ENCODE measurements at regions of chr17 and their contacts with region 1.

Region 1: GRCh38 chr17:35764123-35764991 is 3.7 kb downstream of the C17orf50 start:
- DNase-seq: peak; percentile 91
- ATAC-seq: peak; percentile 87
- H3K4me3 Mint-ChIP-seq: peak overlapping the region; percentile 80
- H3K27ac Mint-ChIP-seq: peak overlapping the region; percentile 76
- H3K4me1 Mint-ChIP-seq: peaks cover 17% of the 10 kb centered on the region
- H3K27me3 Mint-ChIP-seq: peaks cover 11% of the 10 kb centered on the region
- CTCF ChIP-seq: peak; percentile 83

Region 2: DNA sequence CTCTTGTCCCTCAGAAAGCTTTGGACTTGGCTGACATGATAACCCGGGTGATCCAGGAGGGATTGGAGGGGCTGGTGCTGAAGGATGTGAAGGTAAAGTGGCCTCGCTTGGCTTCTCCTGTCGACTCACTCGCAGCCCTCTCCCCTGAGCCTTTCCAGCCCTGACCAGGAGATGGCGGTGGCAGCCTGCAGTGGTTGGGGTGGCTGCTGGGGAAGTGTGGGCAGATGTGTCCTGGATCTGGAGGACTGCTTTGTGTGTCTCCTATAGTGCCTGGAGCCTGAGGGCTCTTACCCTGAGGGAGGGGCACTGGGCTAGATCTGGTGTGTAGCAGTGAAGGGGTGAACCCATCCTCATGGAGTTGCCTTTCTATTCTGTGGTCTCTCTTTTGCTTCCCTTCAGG is 766.2 kb before region 1 on chr17:
- CTCF ChIA-PET with region 1: no interaction called
- POLR2A ChIA-PET with region 1: no interaction called
- DNase-seq: peak; percentile 79
- ATAC-seq: peak; percentile 96
- H3K4me3 Mint-ChIP-seq: no peak overlapping the region
- H3K27ac Mint-ChIP-seq: no peak overlapping the region
- H3K4me1 Mint-ChIP-seq: no peaks in the 10 kb centered on the region
- H3K27me3 Mint-ChIP-seq: no peaks in the 10 kb centered on the region
- CTCF ChIP-seq: peak; percentile 41

Region 3: GRCh38 chr17:35578197-35578928 is 186.0 kb before region 1 on chr17 and contains the start of gene PEX12:
- CTCF ChIA-PET with region 1: interaction called, 14 read pairs
- POLR2A ChIA-PET with region 1: no interaction called
- DNase-seq: peak; percentile 83
- ATAC-seq: peak; percentile 96
- H3K4me3 Mint-ChIP-seq: peak within 1 kb of the TSS; percentile 90
- H3K27ac Mint-ChIP-seq: peak within 1 kb of the TSS; percentile 89
- H3K4me1 Mint-ChIP-seq: peaks cover 11% of the 10 kb centered on the region; the same call in 1 of the 2 replicates
- H3K27me3 Mint-ChIP-seq: peaks cover 4% of the 10 kb centered on the region
- CTCF ChIP-seq: no peak
- total RNA-seq, gene PEX12: 4.7 to 6.5 TPM (median 5.2 TPM) in 3 replicates

Region 4: DNA sequence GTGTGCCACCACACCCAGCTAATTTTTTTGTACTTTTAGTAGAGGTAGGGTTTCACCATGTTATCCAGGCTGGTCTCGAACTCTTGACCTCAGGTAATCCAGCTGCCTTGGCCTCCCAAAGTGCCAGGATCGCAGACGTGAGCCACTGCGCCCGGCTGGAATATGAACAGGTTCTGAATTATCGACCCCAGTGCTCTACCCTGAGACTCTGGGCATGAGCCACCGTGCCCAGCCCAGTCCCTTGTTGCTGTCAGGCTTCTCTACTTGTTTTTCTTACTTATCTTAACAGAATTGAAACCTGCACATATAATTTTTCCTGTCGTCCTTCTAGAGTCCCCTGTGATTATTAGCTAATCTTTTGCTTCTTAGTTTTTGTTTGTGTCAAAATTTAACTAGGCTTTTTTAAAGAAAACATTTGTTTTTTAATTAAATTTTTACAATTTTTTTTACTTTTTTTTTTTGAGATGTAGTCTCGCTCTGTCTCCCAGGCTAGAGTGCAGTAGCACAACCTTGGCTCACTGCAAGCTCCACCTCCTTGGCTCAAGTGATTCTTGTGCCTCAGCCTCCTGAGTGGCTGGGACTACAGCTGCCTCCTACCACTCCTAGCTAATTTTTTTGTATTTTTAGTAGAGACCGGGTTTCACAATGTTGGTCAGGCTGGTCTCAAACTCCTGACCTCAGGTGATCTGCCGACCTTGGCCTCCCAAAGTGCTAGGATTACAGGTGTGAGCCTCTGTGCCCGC is 110.6 kb before region 1 on chr17:
- CTCF ChIA-PET with region 1: no interaction called
- POLR2A ChIA-PET with region 1: no interaction called
- DNase-seq: no peak
- ATAC-seq: no peak
- H3K4me3 Mint-ChIP-seq: no peak overlapping the region
- H3K27ac Mint-ChIP-seq: no peak overlapping the region
- H3K4me1 Mint-ChIP-seq: 0 out of 2 replicates have a peak, but pooled peaks cover under 1% of the 10 kb centered on the region
- H3K27me3 Mint-ChIP-seq: no peaks in the 10 kb centered on the region
- CTCF ChIP-seq: no peak

Region 5: GRCh38 chr17:35668802-35669201 is 95.6 kb before region 1 on chr17:
- CTCF ChIA-PET with region 1: interaction called, 10 read pairs
- POLR2A ChIA-PET with region 1: no interaction called
- DNase-seq: no peak
- ATAC-seq: no peak
- H3K4me3 Mint-ChIP-seq: no peak overlapping the region
- H3K27ac Mint-ChIP-seq: peak overlapping the region; percentile 66
- H3K4me1 Mint-ChIP-seq: peaks cover 25% of the 10 kb centered on the region
- H3K27me3 Mint-ChIP-seq: no peaks in the 10 kb centered on the region
- CTCF ChIP-seq: no peak

Region 6: GRCh38 chr17:35740997-35741931 is 23.1 kb before region 1 on chr17:
- CTCF ChIA-PET with region 1: interaction called, 22 read pairs
- POLR2A ChIA-PET with region 1: no interaction called
- DNase-seq: peak; percentile 62
- ATAC-seq: peak; percentile 75
- H3K4me3 Mint-ChIP-seq: peak overlapping the region; percentile 70
- H3K27ac Mint-ChIP-seq: no peak overlapping the region
- H3K4me1 Mint-ChIP-seq: peaks cover 6% of the 10 kb centered on the region
- H3K27me3 Mint-ChIP-seq: peaks cover 51% of the 10 kb centered on the region
- CTCF ChIP-seq: no peak

Region 7: GRCh38 chr17:35788504-35789368 is 24.4 kb after region 1 on chr17:
- CTCF ChIA-PET with region 1: interaction called, 53 read pairs
- POLR2A ChIA-PET with region 1: no interaction called
- DNase-seq: no peak
- ATAC-seq: no peak
- H3K4me3 Mint-ChIP-seq: no peak overlapping the region
- H3K27ac Mint-ChIP-seq: no peak overlapping the region
- H3K4me1 Mint-ChIP-seq: peaks cover 7% of the 10 kb centered on the region
- H3K27me3 Mint-ChIP-seq: peaks cover 25% of the 10 kb centered on the region
- CTCF ChIP-seq: no peak

Region 8: DNA sequence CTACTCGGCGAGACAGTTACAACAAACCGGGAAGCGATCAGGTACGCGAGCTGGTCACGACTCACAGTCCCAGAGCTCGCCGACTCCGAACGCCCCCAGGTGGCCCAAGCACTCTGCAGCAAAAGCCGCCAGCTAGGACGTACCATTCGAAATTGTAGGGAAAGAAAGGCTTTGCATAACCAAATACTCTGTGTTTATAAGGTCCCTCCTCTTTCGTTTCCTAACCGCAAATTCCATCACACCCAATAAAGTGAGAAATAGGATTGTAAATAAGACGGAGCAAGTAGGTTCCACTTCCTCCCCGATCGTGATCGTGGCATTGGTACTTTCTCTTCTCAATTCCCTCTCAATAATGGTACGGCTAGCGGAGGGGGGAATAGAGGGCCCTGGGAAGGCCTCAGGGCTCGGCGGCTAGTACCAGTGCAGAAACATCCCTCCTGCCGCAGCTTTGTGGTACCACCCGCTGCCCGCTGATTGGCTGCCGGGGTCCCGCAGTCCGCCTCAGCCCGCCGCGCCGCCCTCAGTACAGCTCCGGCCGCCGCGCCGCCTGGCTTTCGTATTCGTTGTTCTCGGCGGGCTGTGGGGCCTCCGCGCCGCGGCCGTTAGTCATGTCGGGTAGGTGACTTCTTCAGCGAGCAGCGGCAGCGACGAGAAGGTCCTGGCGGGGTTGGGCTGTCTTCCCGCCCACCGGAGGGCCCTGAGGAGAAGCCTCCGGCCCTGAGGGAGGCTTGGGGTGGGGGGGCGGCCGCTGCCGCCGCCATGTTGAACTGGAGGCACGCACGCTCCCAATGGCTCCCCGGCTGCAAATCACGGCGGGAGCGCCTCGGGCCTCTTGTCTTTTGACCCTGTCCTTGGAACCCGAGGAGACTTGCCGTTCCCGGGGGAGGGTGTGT is 44.9 kb after region 1 on chr17 and contains the start of gene TAF15:
- CTCF ChIA-PET with region 1: interaction called, 161 read pairs
- POLR2A ChIA-PET with region 1: interaction called, 37 read pairs
- DNase-seq: peak; percentile 97
- ATAC-seq: peak; percentile 90
- H3K4me3 Mint-ChIP-seq: peak within 1 kb of the TSS; percentile 99
- H3K27ac Mint-ChIP-seq: peak within 1 kb of the TSS; percentile 99
- H3K4me1 Mint-ChIP-seq: peaks cover 36% of the 10 kb centered on the region
- H3K27me3 Mint-ChIP-seq: no peaks in the 10 kb centered on the region
- CTCF ChIP-seq: no peak
- total RNA-seq, gene TAF15: 273 to 322 TPM (median 316 TPM) in 3 replicates

Region 9: DNA sequence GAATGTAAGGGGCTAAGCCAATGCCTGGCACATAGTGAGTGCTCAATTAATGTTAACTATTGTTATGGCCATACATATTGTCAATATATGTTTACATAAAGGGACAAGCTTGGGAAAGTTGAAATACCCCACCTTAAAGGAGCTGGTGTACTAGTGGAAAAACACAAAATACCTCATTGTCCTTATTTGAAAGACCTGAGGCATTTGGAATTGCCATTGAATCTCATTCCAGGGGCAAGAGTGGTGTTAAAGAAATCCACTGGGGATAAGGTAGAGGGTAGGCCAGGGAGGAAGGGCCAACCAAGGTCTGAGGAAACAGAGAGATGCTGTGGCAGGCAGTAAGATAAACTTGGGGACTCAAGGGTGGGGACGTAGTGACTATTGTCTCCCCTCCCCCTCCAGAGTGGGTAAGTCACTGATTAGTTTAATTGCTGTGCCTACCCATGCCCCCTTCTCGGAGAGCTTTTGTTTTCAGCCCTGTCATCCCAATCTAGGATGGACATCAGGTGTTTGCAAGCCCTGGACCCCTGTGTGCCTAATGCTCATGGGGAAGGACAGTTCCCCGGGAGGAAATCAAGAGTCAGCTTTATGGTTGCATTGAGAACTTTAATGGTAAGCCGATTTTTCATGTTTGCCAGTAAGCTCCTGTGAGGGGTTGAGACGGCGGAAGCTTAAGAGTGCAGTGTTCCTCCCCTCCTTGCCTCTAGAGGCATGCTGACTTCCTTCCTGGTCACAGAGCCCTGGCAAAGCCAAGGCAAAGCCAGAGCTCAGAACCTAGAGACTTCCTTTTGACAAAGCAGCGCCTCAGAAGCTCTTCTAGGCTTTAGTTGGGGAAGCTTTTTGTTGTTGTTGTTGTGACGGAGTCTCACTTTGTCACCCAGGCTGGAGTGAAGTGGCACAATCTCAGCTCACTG is 106.8 kb after region 1 on chr17:
- CTCF ChIA-PET with region 1: interaction called, 18 read pairs
- POLR2A ChIA-PET with region 1: no interaction called
- DNase-seq: peak; percentile 27
- ATAC-seq: peak; percentile 98
- H3K4me3 Mint-ChIP-seq: no peak overlapping the region
- H3K27ac Mint-ChIP-seq: no peak overlapping the region
- H3K4me1 Mint-ChIP-seq: peaks cover 15% of the 10 kb centered on the region
- H3K27me3 Mint-ChIP-seq: no peaks in the 10 kb centered on the region
- CTCF ChIP-seq: no peak